ENCODE measurements at regions of chr12 and their contacts with region 1.

Region 1: GRCh38 chr12:3896801-3897331 is 23.7 kb upstream of the PARP11 start:
- DNase-seq: no peak
- ATAC-seq: no peak
- H3K4me3 ChIP-seq: no peak overlapping the region
- H3K27ac ChIP-seq: no peak overlapping the region
- H3K4me1 ChIP-seq: no peaks in the 10 kb centered on the region
- H3K27me3 ChIP-seq: peaks cover 62% of the 10 kb centered on the region
- CTCF ChIP-seq: no peak

Region 2: DNA sequence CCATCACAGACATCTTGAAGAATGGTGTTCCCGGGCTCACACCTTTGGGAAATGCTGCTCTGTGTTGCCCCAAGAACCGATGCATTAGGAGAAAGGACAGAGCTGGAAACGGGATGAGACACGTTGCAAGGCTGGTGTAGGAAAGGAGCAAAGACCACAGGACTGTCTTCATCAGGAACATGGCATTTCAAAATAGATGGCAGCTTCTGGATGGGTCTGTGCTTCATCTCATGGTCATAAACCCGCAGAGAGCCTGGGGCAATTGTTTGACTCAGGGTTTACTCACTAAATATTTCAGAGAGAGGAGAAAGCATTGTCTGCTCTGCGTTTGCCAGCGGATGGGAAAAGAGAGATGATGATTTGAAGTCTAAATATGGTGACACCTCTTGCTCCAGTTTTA is 1767.8 kb before region 1 on chr12:
- CTCF ChIA-PET with region 1: no interaction called
- POLR2A ChIA-PET with region 1: interaction called, 16 read pairs
- intact Hi-C with region 1: no loop called
- DNase-seq: peak; percentile 86
- ATAC-seq: peak; percentile 51
- H3K4me3 ChIP-seq: no peak overlapping the region
- H3K27ac ChIP-seq: no peak overlapping the region
- H3K4me1 ChIP-seq: peaks cover 10% of the 10 kb centered on the region; the same call in 1 of the 2 replicates
- H3K27me3 ChIP-seq: no peaks in the 10 kb centered on the region
- CTCF ChIP-seq: no peak

Region 3: DNA sequence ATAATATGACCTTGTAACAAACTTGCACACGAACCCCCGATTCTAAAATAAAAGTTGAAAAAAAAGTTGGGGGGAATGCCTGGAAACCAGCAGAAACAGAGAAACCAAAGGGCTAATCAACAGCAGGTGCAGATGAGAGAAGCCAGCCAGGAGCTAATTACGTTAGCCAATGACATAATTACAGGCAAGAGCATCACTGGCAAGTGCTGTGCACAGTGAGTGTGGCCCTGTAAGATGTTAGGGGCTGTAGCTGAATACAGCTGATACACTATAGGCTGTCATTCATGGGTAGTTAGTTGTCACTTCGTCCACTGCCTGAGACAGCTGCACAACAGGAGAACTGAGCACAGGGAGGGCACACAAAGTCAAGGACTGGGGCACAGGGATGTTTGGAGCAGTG is 489.9 kb after region 1 on chr12:
- CTCF ChIA-PET with region 1: no interaction called
- POLR2A ChIA-PET with region 1: no interaction called
- intact Hi-C with region 1: loop called (anchors 5 kb)
- DNase-seq: no peak
- ATAC-seq: no peak
- H3K4me3 ChIP-seq: no peak overlapping the region
- H3K27ac ChIP-seq: no peak overlapping the region
- H3K4me1 ChIP-seq: no peaks in the 10 kb centered on the region
- H3K27me3 ChIP-seq: peaks cover 50% of the 10 kb centered on the region
- CTCF ChIP-seq: no peak

Measured in PC-3 (cell line).